PC-9 (cell line): ENCODE measurements at regions of chr16 and their contacts with region 1.

Region 1: GRCh38 chr16:4011225-4011939 is 104.9 kb downstream of the ADCY9 start:
- DNase-seq: no peak
- H3K4me3 ChIP-seq: no peak overlapping the region
- H3K27ac ChIP-seq: no peak overlapping the region
- H3K4me1 ChIP-seq: peaks cover 9% of the 10 kb centered on the region; the same call in 1 of the 2 replicates
- H3K27me3 ChIP-seq: no peaks in the 10 kb centered on the region
- CTCF ChIP-seq: no peak

Region 2: DNA sequence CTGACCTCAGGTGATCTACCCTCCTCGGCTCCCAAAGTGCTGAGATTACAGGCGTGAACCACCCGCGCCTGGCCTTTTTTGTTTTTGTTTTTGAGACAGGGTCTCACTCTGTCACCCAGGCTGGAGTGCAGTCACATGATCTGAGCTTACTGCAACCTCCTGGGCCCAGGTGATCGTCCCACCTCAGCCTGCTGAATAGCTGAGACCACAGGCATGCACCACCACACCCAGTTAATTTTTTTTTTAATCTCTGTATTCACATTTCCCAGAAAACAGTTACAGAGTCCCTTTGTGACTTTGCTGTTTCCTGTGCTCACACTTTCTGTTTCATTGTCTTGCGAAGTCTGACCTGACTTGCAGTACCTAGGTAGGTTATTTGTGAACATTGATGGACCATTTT is 507.9 kb before region 1 on chr16:
- CTCF ChIA-PET with region 1: no interaction called
- POLR2A ChIA-PET with region 1: no interaction called
- intact Hi-C with region 1: no loop called
- DNase-seq: peak; percentile 54 to 82
- H3K4me3 ChIP-seq: no peak overlapping the region
- H3K27ac ChIP-seq: peak overlapping the region; percentile 22; the same call in 1 of the 2 replicates
- H3K4me1 ChIP-seq: peaks cover 20% of the 10 kb centered on the region
- H3K27me3 ChIP-seq: no peaks in the 10 kb centered on the region
- CTCF ChIP-seq: no peak

Region 3: DNA sequence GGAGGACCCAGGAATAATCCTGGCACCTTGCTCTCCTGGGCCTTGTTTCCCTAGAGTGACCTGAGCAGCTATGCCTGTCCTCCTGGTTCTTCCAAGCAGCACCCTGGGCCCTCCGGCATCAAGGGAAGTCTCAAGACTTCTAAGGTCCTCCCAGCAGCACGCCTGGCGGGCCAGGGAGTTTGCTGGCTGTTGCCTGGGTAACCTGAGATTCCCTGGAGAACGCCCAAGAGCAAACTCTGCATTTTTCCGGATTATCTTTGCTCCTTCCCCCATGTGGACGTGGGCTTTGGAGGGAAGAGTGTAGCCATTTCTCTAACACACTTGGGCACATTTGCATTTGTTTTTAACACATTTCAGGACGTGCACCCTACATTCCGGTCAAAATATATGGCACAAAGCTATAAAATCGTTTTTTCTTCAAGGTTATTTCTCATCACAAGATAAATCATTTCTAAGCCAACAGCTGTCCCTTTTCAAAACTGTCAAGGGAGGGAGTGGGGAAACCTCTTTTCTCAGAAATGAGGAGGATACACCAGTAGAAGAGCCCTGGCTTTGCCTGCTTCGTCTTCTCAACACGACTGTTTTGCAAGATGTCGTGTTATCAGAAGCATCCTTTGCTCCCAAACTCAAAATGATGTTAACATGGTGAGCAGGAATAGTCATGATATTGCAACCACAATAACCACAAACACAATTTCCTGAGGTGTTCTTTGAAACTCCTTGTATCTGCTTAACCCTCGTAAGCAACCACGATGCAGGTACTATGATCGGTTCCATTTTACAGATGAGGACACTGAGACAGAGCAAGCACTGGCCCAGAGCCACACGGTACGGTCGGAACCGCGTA is 11.7 kb before region 1 on chr16:
- CTCF ChIA-PET with region 1: no interaction called
- POLR2A ChIA-PET with region 1: interaction called, 17 read pairs
- intact Hi-C with region 1: no loop called
- DNase-seq: no peak
- H3K4me3 ChIP-seq: no peak overlapping the region
- H3K27ac ChIP-seq: no peak overlapping the region
- H3K4me1 ChIP-seq: no peaks in the 10 kb centered on the region
- H3K27me3 ChIP-seq: no peaks in the 10 kb centered on the region
- CTCF ChIP-seq: no peak

Region 4: DNA sequence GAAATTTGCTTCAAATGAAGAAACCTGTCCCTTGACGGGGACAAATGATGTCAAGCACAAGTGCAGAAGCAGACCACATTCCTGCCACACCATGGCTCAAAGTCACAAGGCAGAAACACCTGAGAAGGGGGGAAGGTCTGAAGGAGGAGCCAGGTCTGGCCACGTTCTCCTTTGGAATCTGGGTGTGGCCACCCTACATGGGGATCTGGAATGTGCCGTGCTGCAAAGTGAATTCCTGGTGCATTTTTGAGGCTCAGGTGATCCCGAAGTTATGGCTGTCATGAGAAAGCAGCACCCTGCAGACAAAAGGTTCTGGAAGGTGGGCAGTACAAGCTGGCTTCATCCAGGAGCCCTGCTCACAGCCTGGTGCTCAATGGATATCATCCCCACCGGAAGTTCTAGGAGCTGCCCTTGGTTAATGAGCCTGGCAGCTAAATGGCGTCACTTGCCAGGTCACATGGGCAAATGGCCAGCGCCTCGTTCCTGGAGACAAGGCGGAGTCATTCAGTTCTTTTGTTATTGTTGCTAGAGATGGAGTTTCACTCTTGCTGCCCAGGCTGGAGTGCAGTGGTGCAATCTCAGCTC is 124.9 kb after region 1 on chr16:
- CTCF ChIA-PET with region 1: no interaction called
- POLR2A ChIA-PET with region 1: interaction called, 5 read pairs
- intact Hi-C with region 1: loop called (anchors 5 kb)
- DNase-seq: peak; percentile 95 to 97
- H3K4me3 ChIP-seq: peak overlapping the region; percentile 9; the same call in 1 of the 2 replicates
- H3K27ac ChIP-seq: peak overlapping the region; percentile 84
- H3K4me1 ChIP-seq: peaks cover 11% of the 10 kb centered on the region
- H3K27me3 ChIP-seq: no peaks in the 10 kb centered on the region
- CTCF ChIP-seq: no peak; the same call in 1 of the 2 replicates